ENCODE measurements at regions of chr14 and their contacts with region 1.

Region 1: GRCh38 chr14:105490572-105491366 is at the start of gene TEDC1:
- DNase-seq: peak; percentile 100
- H3K4me3 ChIP-seq: peak within 1 kb of the TSS; percentile 50 to 67 (median 52)
- H3K27ac ChIP-seq: peak within 1 kb of the TSS; percentile 82
- H3K4me1 ChIP-seq: peaks cover 2% of the 10 kb centered on the region
- H3K27me3 ChIP-seq: peaks cover 0 to 12% of the 10 kb centered on the region in 2 experiments
- CTCF ChIP-seq: peak; percentile 78 to 96
- POLR2A ChIP-seq: peak; percentile 75
- total RNA-seq, gene TEDC1: 25.3 and 29.9 TPM in 2 replicates

Region 2: DNA sequence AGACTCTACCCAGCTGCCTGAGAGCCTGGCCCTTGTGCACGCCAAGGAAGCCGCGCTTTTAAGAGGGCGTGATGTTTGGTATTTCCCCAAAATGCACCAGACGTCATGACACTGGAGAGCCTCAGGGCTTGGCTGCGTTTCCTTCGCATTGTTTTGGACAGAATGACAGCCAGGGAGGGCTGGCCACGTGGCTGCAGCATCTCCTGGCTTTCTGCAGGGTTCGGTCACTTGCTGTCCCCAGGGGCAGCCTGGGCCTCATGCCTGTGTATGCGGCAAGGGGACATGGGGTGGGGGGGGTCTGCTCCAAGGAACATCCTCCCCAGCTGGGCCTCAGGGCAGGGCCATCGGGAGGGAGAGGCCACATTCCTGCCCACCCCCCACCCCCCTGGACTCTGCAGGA is 293.5 kb before region 1 on chr14:
- CTCF ChIA-PET with region 1: no interaction called
- POLR2A ChIA-PET with region 1: no interaction called
- dilution Hi-C with region 1: no loop called
- intact Hi-C with region 1: loop called (anchors 5 kb)
- DNase-seq: no peak
- H3K4me3 ChIP-seq: no peak overlapping the region
- H3K27ac ChIP-seq: peak overlapping the region; percentile 87
- H3K4me1 ChIP-seq: peaks cover 72% of the 10 kb centered on the region
- H3K27me3 ChIP-seq: no peaks in the 10 kb centered on the region
- CTCF ChIP-seq: no peak
- POLR2A ChIP-seq: no peak

Region 3: GRCh38 chr14:105375635-105376057 is 115.1 kb before region 1 on chr14:
- CTCF ChIA-PET with region 1: interaction called, 239 read pairs
- POLR2A ChIA-PET with region 1: interaction called, 3 read pairs
- dilution Hi-C with region 1: no loop called
- intact Hi-C with region 1: loop called (anchors 1 kb)
- DNase-seq: peak; percentile 54
- H3K4me3 ChIP-seq: no peak overlapping the region
- H3K27ac ChIP-seq: no peak overlapping the region
- H3K4me1 ChIP-seq: peaks cover 10% of the 10 kb centered on the region
- H3K27me3 ChIP-seq: no peaks in the 10 kb centered on the region
- CTCF ChIP-seq: no peak
- POLR2A ChIP-seq: no peak

Region 4: DNA sequence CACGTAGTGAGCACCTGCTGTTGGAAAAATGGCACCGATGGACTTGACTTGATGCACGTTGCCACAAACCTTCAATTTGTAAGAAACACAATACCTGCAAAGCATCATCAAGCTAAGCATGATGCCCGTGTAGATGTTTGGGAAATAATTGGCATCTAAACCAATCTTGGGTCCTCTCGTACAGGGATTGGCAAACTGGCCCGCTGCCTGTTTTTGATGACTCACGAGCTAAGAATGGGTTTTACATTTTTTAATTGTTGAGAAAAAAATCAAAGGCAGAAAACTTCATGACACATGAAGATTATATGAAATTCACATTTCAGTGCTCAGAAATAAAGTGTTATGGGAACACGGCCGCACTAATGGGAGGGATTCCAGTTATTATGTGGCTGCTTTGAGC is 60.2 kb before region 1 on chr14:
- CTCF ChIA-PET with region 1: interaction called, 8 read pairs
- POLR2A ChIA-PET with region 1: no interaction called
- dilution Hi-C with region 1: no loop called
- intact Hi-C with region 1: loop called (anchors 1 kb)
- DNase-seq: peak; percentile 90
- H3K4me3 ChIP-seq: no peak overlapping the region
- H3K27ac ChIP-seq: peak overlapping the region; percentile 86
- H3K4me1 ChIP-seq: peaks cover 34% of the 10 kb centered on the region
- H3K27me3 ChIP-seq: no peaks in the 10 kb centered on the region
- CTCF ChIP-seq: no peak
- POLR2A ChIP-seq: peak; percentile 20

Region 5: DNA sequence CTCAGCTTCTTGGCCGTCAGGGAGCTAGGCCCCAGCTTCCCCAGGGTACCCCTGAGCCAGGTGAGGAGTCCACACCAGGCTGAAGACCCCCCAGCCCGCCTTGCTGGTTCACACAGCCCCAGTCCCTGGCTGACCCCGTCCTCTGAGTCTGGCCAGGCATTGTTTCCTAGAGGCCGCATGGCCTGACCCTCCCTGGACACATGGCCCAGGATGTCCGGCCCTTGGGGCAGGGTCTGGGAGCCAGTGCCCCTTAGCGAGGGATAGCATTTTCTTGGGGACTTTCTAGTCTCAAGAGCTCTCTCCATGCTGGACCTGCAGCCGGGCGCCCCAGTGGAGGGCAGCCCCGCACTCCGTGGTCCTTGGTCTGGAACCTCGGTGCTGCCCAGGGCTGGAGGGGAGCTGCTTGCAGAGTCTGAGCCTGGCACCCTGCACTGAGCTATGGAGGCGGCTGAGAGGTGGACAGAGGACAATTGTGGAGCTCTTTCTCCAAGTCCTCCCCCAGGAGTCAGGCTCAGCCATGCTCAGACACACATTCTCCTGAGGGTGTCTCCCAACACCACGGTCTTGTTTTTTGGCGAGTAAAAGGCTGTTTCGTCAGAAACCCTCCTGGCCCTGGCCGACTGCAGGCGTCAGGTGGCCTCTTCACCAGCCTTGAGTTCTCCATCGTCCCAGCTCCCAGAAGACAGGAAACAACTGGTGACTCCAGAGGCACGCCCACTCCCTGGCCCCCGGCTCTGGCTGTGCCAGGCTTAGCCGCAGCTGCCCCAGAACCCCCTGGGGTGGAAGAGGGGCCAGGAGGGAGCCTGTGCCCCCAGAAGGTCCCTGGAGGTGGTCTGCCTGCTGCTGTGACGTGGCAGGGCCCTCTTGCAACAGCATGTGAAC is 33.8 kb before region 1 on chr14:
- CTCF ChIA-PET with region 1: interaction called, 16 read pairs
- POLR2A ChIA-PET with region 1: no interaction called
- dilution Hi-C with region 1: no loop called
- intact Hi-C with region 1: no loop called
- DNase-seq: no peak
- H3K4me3 ChIP-seq: no peak overlapping the region
- H3K27ac ChIP-seq: no peak overlapping the region
- H3K4me1 ChIP-seq: no peaks in the 10 kb centered on the region
- H3K27me3 ChIP-seq: no peaks in the 10 kb centered on the region
- CTCF ChIP-seq: no peak
- POLR2A ChIP-seq: no peak

Region 6: GRCh38 chr14:105527661-105528581 is 37.2 kb after region 1 on chr14:
- CTCF ChIA-PET with region 1: interaction called, 13 read pairs
- POLR2A ChIA-PET with region 1: no interaction called
- dilution Hi-C with region 1: no loop called
- intact Hi-C with region 1: loop called (anchors 1 kb)
- DNase-seq: peak; percentile 61
- H3K4me3 ChIP-seq: peak overlapping the region; percentile 26 to 63 (median 49)
- H3K27ac ChIP-seq: no peak overlapping the region
- H3K4me1 ChIP-seq: peaks cover 17% of the 10 kb centered on the region
- H3K27me3 ChIP-seq: peaks cover 6 to 7% of the 10 kb centered on the region in 2 experiments
- CTCF ChIP-seq: peak; percentile 68 to 91
- POLR2A ChIP-seq: peak; percentile 46

Measured in endothelial cell of umbilical vein (primary cell).